ENCODE measurements at regions of chr14 and their contacts with region 1.

Region 1: DNA sequence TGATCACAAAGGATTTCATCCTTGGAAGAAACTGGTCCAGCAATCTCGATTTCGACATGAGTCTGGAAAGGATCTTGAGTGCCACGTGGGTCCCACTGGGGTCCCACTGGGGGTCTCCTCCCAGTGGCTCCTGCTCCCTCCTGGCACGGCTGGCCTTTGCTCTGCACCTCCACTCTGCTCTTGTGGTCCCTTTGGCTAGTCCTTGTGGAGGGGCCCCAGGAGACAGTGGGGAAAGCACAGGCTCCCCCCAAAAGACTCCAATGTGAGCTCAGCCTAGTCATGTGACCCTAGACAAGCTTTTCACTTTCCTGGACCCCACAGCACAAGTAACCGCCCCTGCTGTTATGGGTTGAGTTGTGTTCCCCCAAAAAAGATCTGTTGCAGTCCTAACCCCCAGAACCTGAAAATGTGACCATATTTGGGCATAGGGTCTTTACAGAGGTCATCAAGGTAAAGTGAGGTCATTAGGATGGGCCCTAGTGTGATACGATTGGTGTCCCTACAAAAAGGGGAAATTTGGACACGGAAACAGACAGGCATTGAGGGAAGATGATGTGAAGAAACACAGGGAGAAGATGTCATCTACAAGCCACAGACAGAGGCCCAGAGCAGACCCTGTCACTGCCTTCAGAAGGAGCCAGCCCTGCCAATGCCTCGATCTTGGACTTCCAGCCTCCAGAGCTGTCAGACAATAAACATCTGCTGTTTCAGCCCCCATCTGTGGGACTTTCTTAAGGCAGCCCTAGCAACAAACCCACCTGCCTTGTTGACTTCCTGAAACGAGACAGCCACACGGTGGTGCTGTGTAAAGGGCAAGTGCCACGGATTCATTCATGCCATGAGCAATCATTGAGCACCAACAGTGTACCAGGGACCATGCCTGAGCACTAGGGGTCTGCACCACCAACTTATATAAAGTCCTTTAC is 23.8 kb upstream of the PPP2R5C start:
- DNase-seq: peak in 1 of 5 donors; percentile 28
- H3K4me3 ChIP-seq: no peak overlapping the region
- H3K4me3 Mint-ChIP-seq: no peak overlapping the region
- H3K27ac ChIP-seq: no peak overlapping the region
- H3K27ac Mint-ChIP-seq: peak overlapping the region; percentile 8 to 92 (median 59)
- H3K4me1 ChIP-seq: peaks cover 13% of the 10 kb centered on the region
- H3K4me1 Mint-ChIP-seq: peaks cover 5 to 25% (median 9%) of the 10 kb centered on the region in 4 donors
- H3K27me3 ChIP-seq: no peaks in the 10 kb centered on the region
- H3K27me3 Mint-ChIP-seq: no peaks in the 10 kb centered on the region

Region 2: GRCh38 chr14:101755591-101756324 is 18.1 kb after region 1 on chr14:
- CTCF ChIA-PET with region 1: interaction called, 5 read pairs
- POLR2A ChIA-PET with region 1: interaction called, 8 read pairs
- intact Hi-C with region 1: loop called (anchors 2 kb)
- DNase-seq: no peak
- H3K4me3 ChIP-seq: no peak overlapping the region
- H3K4me3 Mint-ChIP-seq: no peak overlapping the region
- H3K27ac ChIP-seq: no peak overlapping the region
- H3K27ac Mint-ChIP-seq: no peak overlapping the region
- H3K4me1 ChIP-seq: peaks cover 10% of the 10 kb centered on the region
- H3K4me1 Mint-ChIP-seq: peaks cover 5 to 16% (median 13%) of the 10 kb centered on the region in 4 donors
- H3K27me3 ChIP-seq: no peaks in the 10 kb centered on the region
- H3K27me3 Mint-ChIP-seq: peaks cover 13 to 15% of the 10 kb centered on the region in 2 donors